Activated CD4-positive, alpha-beta T cell treated with anti-CD3 and anti-CD28 coated beads, Interleukin-2, amount 10 ng/mL, durations not matched to agents 24 days and 14 days (primary cell): ENCODE measurements at regions of chr6 and their contacts with region 1.

Region 1: GRCh38 chr6:89729818-89730217 is 89.8 kb downstream of the MDN1 start:
- DNase-seq: no peak
- H3K4me3 Mint-ChIP-seq: no peak overlapping the region
- H3K27ac Mint-ChIP-seq: peak overlapping the region; percentile 25
- H3K4me1 Mint-ChIP-seq: peaks cover 3% of the 10 kb centered on the region
- H3K27me3 Mint-ChIP-seq: no peaks in the 10 kb centered on the region

Region 2: DNA sequence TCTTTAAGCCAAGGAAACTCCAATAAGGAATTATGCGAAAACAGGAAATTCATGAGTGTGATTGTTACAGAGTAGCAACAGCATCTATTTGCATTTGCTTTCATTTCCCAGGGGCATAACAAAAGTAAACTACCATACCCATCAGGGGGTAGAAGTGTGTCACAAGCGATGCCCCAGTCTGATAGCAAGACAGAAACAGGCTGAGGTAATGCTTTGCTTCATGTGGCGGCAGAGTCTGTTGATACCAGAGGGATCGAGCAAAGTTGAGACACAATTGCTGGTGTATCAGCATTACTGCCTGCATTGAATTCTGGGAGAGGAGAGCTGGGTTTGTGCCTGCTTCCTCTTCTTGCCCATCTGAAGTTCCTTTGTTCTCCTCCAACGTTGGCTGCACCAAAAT is 40.1 kb before region 1 on chr6:
- intact Hi-C with region 1: loop called (anchors 10 kb)
- DNase-seq: no peak
- H3K4me3 Mint-ChIP-seq: no peak overlapping the region
- H3K27ac Mint-ChIP-seq: no peak overlapping the region
- H3K4me1 Mint-ChIP-seq: peaks cover 5% of the 10 kb centered on the region
- H3K27me3 Mint-ChIP-seq: no peaks in the 10 kb centered on the region

Region 3: GRCh38 chr6:89787660-89788328 is 58.0 kb after region 1 on chr6:
- intact Hi-C with region 1: loop called (anchors 5 kb)
- DNase-seq: no peak
- H3K4me3 Mint-ChIP-seq: no peak overlapping the region
- H3K27ac Mint-ChIP-seq: no peak overlapping the region
- H3K4me1 Mint-ChIP-seq: peaks cover 4% of the 10 kb centered on the region
- H3K27me3 Mint-ChIP-seq: no peaks in the 10 kb centered on the region